H1 (cell line): ENCODE measurements at regions of chrX and their contacts with region 1.

Region 1: GRCh38 chrX:100636321-100636991 is at the start of gene TSPAN6:
- DNase-seq: peak; percentile 47 to 81
- H3K4me3 ChIP-seq: peak within 1 kb of the TSS; percentile 63 to 86 (median 75)
- H3K27ac ChIP-seq: peak within 1 kb of the TSS; percentile 88
- H3K4me1 ChIP-seq: peaks cover 0 to 2% (median 0%) of the 10 kb centered on the region in 4 experiments; a peak in 1 of 7 replicates
- H3K27me3 ChIP-seq: no peaks in the 10 kb centered on the region
- CTCF ChIP-seq: peak in 2 of 3 experiments; percentile 33 to 47; a peak in 3 of 4 replicates
- EP300 ChIP-seq: no peak
- POLR2A ChIP-seq: peak; percentile 69 to 75
- RAD21 ChIP-seq: peak; percentile 8 to 22; a peak in 1 of 4 replicates
- total RNA-seq, gene TSPAN6: 56.8 and 58.1 TPM in 2 replicates

Region 2: GRCh38 chrX:100477958-100478357 is 158.5 kb before region 1 on chrX:
- CTCF ChIA-PET with region 1: no interaction called
- POLR2A ChIA-PET with region 1: no interaction called
- DNase-seq: no peak
- H3K4me3 ChIP-seq: no peak overlapping the region
- H3K27ac ChIP-seq: no peak overlapping the region
- H3K4me1 ChIP-seq: no peaks in the 10 kb centered on the region
- H3K27me3 ChIP-seq: no peaks in the 10 kb centered on the region
- CTCF ChIP-seq: no peak
- EP300 ChIP-seq: no peak
- POLR2A ChIP-seq: no peak
- RAD21 ChIP-seq: no peak

Region 3: DNA sequence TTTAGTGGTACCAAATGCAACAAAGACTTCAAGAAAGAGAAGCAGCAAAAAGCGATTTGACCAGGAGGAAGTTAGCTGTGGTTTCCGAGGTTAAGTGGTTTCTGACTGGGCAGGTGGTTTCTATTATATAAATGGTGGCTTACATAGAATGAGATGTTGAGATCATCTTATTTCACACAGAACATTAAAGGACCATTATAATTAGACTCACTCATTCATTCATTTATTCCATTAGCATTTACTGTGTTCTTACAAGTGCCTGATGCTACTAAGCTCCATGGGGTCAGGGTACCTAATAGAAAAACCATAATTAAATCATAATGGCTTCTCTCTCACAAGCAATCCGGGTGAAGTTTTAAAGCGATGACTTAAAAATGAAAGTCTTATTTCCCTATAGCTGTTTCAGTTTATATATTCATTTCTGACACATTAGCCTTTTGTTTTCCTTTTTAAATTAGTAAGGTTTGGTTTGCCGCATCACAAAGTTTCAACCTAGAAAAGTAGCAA is 10.4 kb before region 1 on chrX:
- CTCF ChIA-PET with region 1: interaction called, 6 read pairs
- POLR2A ChIA-PET with region 1: interaction called, 13 read pairs
- DNase-seq: no peak
- H3K4me3 ChIP-seq: no peak overlapping the region
- H3K27ac ChIP-seq: no peak overlapping the region
- H3K4me1 ChIP-seq: no peaks in the 10 kb centered on the region
- H3K27me3 ChIP-seq: no peaks in the 10 kb centered on the region
- CTCF ChIP-seq: no peak
- EP300 ChIP-seq: no peak
- POLR2A ChIP-seq: no peak
- RAD21 ChIP-seq: no peak

Region 4: GRCh38 chrX:100649550-100650356 is 13.3 kb after region 1 on chrX:
- CTCF ChIA-PET with region 1: interaction called, 7 read pairs
- POLR2A ChIA-PET with region 1: interaction called, 14 read pairs
- DNase-seq: no peak
- H3K4me3 ChIP-seq: no peak overlapping the region
- H3K27ac ChIP-seq: no peak overlapping the region
- H3K4me1 ChIP-seq: peaks cover 0 to 10% (median 4%) of the 10 kb centered on the region in 4 experiments; a peak in 3 of 7 replicates
- H3K27me3 ChIP-seq: no peaks in the 10 kb centered on the region
- CTCF ChIP-seq: no peak
- EP300 ChIP-seq: no peak
- POLR2A ChIP-seq: no peak
- RAD21 ChIP-seq: no peak